ENCODE measurements at regions of chr1 and their contacts with region 1.

Region 1: GRCh38 chr1:236759252-236759859 is 35.7 kb upstream of the MTR start:
- DNase-seq: no peak
- ATAC-seq: peak in 3 of 4 donors; percentile 62 to 67 (median 63)
- H3K4me3 ChIP-seq: no peak overlapping the region
- H3K27ac ChIP-seq: no peak overlapping the region
- H3K4me1 ChIP-seq: peaks cover 0 to 15% (median 6%) of the 10 kb centered on the region in 4 donors
- H3K27me3 ChIP-seq: no peaks in the 10 kb centered on the region
- CTCF ChIP-seq: peak; percentile 62 to 76 (median 68)
- POLR2A ChIP-seq: no peak

Region 2: DNA sequence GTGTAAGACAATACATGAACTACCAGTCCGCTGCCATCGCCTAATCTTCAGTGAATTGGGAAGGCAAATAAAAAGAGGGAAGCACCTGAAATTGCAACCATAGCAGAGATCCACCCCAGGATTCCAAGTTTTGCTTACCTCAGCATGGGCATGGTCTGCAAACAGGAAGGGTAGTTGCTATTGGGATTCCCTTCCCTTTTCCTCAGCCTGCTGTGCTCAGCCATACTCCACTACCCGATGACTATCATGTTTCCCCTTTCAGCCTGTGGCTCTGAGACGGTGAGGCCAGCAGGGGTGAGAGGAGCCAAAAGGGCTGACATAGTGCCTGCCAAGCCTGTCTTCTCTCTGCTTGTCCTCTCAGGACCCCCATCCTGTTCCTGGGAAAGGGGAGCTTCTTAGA is 552.8 kb before region 1 on chr1:
- intact Hi-C with region 1: no loop called
- DNase-seq: peak in 1 of 3 donors; percentile 53
- ATAC-seq: peak; percentile 73 to 88 (median 82)
- H3K4me3 ChIP-seq: no peak overlapping the region
- H3K27ac ChIP-seq: no peak overlapping the region
- H3K4me1 ChIP-seq: no peaks in the 10 kb centered on the region
- H3K27me3 ChIP-seq: no peaks in the 10 kb centered on the region
- CTCF ChIP-seq: no peak
- POLR2A ChIP-seq: no peak

Region 3: DNA sequence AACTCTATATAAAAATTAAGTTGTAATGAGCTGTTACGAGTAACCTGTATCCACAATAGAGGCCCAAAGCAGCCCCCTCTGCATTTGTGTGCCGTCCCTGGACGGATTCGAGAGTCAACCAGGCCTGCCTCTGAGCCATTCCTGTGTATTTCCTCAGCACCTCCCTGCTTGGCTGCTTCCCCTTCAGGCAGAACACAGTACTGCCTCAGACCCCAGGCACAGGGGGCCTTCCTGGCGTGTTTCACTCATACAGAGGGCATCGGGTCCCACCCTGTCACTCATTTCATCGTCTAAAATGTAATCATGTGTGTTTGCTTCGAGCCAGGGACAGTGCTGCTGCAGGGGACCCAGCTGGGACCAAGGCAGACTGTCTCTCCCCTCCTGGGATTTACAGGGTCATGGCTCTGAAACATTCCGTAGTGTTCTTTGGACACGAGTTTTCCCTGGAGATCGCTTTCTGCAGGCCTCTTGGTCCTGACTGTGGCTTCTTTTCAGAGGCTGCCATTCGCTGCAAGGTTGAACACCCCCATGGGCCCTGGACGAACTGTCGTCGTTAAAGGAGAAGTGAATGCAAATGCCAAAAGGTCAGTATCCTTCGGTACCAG is 216.2 kb before region 1 on chr1:
- intact Hi-C with region 1: no loop called
- DNase-seq: no peak
- ATAC-seq: peak in 2 of 4 donors; percentile 18 to 38
- H3K4me3 ChIP-seq: no peak overlapping the region
- H3K27ac ChIP-seq: no peak overlapping the region
- H3K4me1 ChIP-seq: no peaks in the 10 kb centered on the region
- H3K27me3 ChIP-seq: no peaks in the 10 kb centered on the region
- CTCF ChIP-seq: no peak
- POLR2A ChIP-seq: no peak

Region 4: GRCh38 chr1:236795757-236796725 is 36.7 kb after region 1 on chr1:
- intact Hi-C with region 1: no loop called
- DNase-seq: peak in 1 of 3 donors; percentile 63
- ATAC-seq: peak; percentile 48 to 58 (median 52)
- H3K4me3 ChIP-seq: peak overlapping the region; percentile 81 to 85 (median 83)
- H3K27ac ChIP-seq: peak overlapping the region; percentile 76 to 87 (median 83)
- H3K4me1 ChIP-seq: peaks cover 0 to 20% (median 2%) of the 10 kb centered on the region in 4 donors
- H3K27me3 ChIP-seq: no peaks in the 10 kb centered on the region
- CTCF ChIP-seq: no peak
- POLR2A ChIP-seq: no peak

Region 5: DNA sequence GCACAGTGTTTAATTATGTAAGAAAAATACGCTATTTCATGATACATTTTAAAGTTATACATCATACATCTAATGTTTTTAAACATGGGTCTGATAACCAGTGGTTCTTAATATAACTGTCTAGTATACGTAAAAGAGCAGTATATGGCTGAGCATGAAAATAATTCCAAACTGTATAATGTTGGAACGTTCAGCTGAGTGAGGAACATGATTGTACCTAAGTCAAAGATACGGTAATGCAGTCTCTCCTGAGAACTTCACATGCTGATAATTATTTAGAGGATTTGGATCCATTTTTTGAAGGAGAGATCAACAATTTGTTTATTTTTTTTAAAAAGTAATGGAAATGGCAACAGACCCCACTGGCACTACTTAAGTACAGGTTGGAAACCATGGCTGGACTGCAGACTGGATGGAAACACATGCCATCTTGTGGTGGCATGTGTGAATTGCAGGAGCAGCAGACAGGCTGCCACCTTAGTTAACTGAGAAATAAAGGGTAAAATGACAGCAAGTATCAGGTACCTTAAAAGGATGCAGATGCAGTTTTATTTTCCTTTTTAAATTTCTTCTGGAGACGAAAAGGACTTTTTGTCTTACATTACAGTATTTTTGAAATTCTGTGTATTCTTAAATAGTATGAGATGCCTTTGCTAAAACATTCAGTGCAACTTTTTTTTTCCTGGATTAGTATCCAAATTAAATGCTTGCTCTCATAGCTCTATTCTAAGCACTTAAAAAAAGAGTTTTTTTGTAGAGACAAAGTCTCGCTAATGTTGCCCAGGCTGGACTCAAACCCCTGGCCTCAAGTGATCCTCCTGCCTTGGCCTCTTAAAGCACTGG is 109.5 kb after region 1 on chr1:
- intact Hi-C with region 1: loop called (anchors 5 kb)
- DNase-seq: peak in 1 of 3 donors; percentile 56
- ATAC-seq: peak; percentile 92 to 95 (median 93)
- H3K4me3 ChIP-seq: no peak overlapping the region
- H3K27ac ChIP-seq: no peak overlapping the region
- H3K4me1 ChIP-seq: peaks cover 0 to 20% (median 7%) of the 10 kb centered on the region in 4 donors
- H3K27me3 ChIP-seq: no peaks in the 10 kb centered on the region
- CTCF ChIP-seq: peak; percentile 92 to 98 (median 94)
- POLR2A ChIP-seq: no peak